ENCODE measurements at regions of chr11 and their contacts with region 1.

Region 1: DNA sequence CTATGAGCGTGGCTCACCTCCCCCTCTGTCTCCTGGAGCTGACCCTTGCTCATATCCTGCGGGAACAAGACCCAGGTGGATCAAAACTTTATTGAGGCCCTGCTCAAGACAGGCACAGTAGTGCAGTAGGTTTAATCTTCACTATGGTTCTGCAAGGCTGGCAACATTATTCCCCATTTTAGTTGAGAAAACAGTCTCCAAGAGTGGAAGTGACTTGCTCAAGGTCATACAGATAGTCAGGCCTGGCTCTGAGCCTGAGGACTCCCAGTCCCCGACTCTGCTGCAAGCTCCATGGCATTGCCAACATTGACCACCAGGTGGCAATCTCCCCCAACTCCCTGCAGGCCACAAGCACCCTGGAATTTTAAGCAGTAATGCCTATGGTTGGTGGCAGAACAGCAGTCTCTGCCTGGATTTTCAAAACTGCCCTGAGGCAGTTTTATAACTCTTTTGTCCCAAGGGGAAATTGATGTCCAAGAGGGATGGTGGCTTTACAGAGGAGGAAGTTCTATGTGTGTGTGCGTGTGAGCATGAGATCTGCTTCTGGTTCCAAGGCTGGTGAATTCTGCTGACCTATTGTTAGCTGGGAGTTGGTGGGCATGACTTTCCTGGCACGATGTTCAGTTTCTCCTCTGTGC is 34.1 kb downstream of the NEU3 start:
- DNase-seq: peak; percentile 84
- ATAC-seq: peak; percentile 95

Region 2: GRCh38 chr11:74634537-74634936 is 388.3 kb before region 1 on chr11:
- intact Hi-C with region 1: no loop called
- DNase-seq: no peak
- ATAC-seq: peak; percentile 81

Region 3: DNA sequence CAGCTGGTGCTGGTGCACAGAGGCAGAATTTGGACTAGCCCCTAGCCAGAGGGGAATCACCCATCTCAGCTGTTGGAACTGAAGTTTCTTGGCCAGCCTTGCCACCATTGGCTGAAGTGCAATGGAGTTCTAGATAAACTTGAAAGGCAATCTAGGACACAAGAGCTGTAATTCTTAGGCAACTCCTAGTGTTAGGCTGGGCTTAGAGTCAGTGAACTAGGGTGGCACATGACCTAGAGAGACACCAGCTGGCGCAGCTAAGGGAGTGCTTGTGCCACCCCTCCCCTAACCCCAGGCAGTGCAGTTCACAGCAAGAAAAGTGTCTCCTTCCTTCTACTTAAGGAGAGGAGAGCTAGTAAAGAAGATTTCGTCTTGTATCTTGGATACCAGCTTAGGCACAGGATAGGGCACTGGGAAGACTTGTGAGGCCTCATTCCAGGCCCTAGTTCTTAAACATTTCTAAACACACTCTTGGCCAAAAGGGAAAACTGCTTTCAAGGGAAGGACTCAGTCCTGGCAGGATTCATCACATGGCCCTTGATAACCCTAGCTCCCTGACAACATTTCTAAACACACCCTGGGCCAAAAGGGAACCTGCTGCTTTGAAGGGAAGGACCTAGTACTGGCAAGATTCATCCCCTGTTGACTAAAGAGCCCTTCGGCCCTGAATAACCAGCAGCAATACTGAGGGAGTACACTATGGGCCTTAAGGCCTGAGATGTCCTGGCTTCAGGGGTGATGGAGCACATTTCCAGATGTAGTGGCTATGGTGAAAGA is 127.3 kb before region 1 on chr11:
- intact Hi-C with region 1: no loop called
- DNase-seq: no peak
- ATAC-seq: peak; percentile 88

Region 4: DNA sequence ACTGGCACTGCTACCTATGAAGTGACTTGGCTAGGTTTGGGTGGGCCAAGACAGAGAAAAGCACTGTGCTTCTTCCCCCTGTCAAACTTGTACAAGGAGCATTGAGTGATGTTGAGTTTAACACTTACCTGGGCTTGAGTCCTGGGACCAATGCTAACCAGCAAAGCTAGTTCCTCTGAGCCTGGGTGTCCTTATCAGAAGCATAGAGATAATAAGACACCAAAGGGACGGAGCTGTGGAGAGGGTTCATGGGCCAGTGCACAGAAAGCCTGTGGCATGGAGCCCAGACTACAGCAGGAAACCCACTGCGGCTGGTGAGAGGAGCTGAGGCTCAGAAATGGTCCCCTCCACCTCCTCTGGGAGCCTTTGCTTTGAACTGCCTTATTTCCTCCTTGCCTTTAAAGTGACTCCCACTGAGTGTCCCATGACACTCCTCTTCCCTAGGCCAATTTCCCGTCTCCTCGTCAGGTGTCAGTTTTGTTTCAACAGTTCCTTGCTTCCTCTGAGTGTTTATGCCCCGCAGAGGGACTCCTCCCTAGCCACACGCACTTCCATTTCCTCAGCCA is 137.4 kb after region 1 on chr11:
- intact Hi-C with region 1: no loop called
- DNase-seq: no peak
- ATAC-seq: peak; percentile 4

Region 5: GRCh38 chr11:75248690-75249268 is 225.9 kb after region 1 on chr11:
- intact Hi-C with region 1: loop called (anchors 5 kb)
- DNase-seq: peak; percentile 92
- ATAC-seq: peak; percentile 98

Measured in Right ventricle myocardium superior (tissue), 1 donor.